ENCODE measurements at regions of chr15 and their contacts with region 1.

Region 1: GRCh38 chr15:64067564-64068030 is 21.3 kb upstream of the DAPK2 start:
- DNase-seq: peak; percentile 84
- ATAC-seq: peak; percentile 91
- H3K4me3 ChIP-seq: no peak overlapping the region
- H3K4me3 Mint-ChIP-seq: no peak overlapping the region
- H3K27ac ChIP-seq: no peak overlapping the region
- H3K27ac Mint-ChIP-seq: peak overlapping the region; percentile 39
- H3K4me1 ChIP-seq: peaks cover 24 to 27% of the 10 kb centered on the region in 2 donors
- H3K4me1 Mint-ChIP-seq: peaks cover 26% of the 10 kb centered on the region
- H3K27me3 ChIP-seq: no peaks in the 10 kb centered on the region
- H3K27me3 Mint-ChIP-seq: no peaks in the 10 kb centered on the region
- CTCF ChIP-seq: peak; percentile 89

Region 2: DNA sequence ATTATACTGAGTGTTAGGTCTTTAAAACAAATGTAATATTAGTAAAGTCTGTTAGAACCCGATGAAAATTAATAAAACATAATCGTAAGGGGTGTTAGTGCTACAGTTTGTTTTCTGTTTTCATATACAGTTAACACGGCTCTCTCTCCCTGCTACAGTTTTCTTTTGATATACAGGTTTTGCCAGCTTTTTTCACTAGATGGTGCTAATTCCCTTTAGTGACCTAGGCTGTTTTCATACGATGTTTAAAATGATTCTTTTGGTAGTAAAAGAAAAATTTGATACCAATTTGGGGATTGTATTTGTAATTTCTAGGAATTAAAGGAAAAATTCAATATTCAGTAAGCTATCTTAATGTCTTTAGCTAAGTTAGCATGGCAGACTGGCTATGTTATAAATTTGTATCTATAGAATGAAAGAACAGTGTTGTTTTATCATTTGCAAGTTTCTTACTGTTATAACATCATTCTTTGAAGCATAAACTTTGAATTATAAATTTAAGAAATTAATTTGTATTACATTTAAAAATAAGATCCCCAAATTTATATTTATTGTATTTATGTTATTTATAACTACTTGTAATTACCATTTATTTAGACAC is 778.7 kb before region 1 on chr15:
- CTCF ChIA-PET with region 1: interaction called, 11 read pairs
- POLR2A ChIA-PET with region 1: no interaction called
- intact Hi-C with region 1: loop called (anchors 2 kb)
- DNase-seq: peak; percentile 61
- ATAC-seq: no peak
- H3K4me3 ChIP-seq: no peak overlapping the region
- H3K4me3 Mint-ChIP-seq: no peak overlapping the region
- H3K27ac ChIP-seq: no peak overlapping the region
- H3K27ac Mint-ChIP-seq: no peak overlapping the region
- H3K4me1 ChIP-seq: peaks cover 5 to 8% of the 10 kb centered on the region in 2 donors
- H3K4me1 Mint-ChIP-seq: peaks cover 11% of the 10 kb centered on the region
- H3K27me3 ChIP-seq: no peaks in the 10 kb centered on the region
- H3K27me3 Mint-ChIP-seq: no peaks in the 10 kb centered on the region
- CTCF ChIP-seq: peak; percentile 82

Region 3: GRCh38 chr15:63610200-63610841 is 457.3 kb before region 1 on chr15:
- CTCF ChIA-PET with region 1: interaction called, 47 read pairs
- POLR2A ChIA-PET with region 1: no interaction called
- intact Hi-C with region 1: loop called (anchors 1 kb)
- DNase-seq: peak; percentile 81
- ATAC-seq: peak; percentile 94
- H3K4me3 ChIP-seq: no peak overlapping the region
- H3K4me3 Mint-ChIP-seq: no peak overlapping the region
- H3K27ac ChIP-seq: peak overlapping the region; percentile 56 to 77
- H3K27ac Mint-ChIP-seq: peak overlapping the region; percentile 78
- H3K4me1 ChIP-seq: peaks cover 23 to 25% of the 10 kb centered on the region in 2 donors
- H3K4me1 Mint-ChIP-seq: peaks cover 24% of the 10 kb centered on the region
- H3K27me3 ChIP-seq: no peaks in the 10 kb centered on the region
- H3K27me3 Mint-ChIP-seq: no peaks in the 10 kb centered on the region
- CTCF ChIP-seq: peak; percentile 83

Region 4: DNA sequence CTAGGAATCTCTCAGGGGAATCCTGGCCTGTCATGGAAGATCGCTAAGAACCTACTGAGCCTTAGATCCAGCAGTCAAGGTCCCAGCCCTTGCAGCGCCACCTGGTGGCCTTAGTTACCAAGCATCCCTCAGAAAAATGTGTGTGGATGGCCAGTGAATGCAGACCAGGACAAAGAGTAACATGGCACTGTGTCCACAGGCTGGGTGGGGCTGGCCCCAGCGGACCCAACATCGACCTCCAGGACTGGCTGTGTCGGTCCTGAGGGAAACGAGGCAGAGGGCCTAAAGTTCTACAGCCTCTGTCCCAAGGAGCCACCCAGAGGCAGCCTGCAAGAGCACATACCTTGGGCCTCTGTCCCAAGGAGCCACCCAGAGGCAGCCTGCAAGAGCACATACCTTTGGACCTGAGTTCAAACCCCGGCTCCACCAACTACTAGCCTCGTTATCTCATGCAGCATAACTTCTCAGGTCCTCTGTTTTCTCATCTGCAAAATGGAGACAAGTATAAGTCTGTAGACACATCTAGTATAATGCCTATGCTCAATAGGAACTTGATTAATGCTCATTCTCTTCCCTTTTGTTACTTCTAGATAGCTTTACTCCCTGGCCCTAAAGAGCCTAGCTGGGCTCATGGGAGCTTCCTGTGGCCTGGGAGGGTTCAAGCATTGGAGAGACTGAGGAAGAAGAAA is 176.4 kb before region 1 on chr15:
- CTCF ChIA-PET with region 1: interaction called, 44 read pairs
- POLR2A ChIA-PET with region 1: no interaction called
- intact Hi-C with region 1: loop called (anchors 1 kb)
- DNase-seq: peak; percentile 84
- ATAC-seq: peak; percentile 67
- H3K4me3 ChIP-seq: no peak overlapping the region
- H3K4me3 Mint-ChIP-seq: no peak overlapping the region
- H3K27ac ChIP-seq: no peak overlapping the region
- H3K27ac Mint-ChIP-seq: peak overlapping the region; percentile 37
- H3K4me1 ChIP-seq: peaks cover 30 to 35% of the 10 kb centered on the region in 2 donors
- H3K4me1 Mint-ChIP-seq: peaks cover 37% of the 10 kb centered on the region
- H3K27me3 ChIP-seq: no peaks in the 10 kb centered on the region
- H3K27me3 Mint-ChIP-seq: no peaks in the 10 kb centered on the region
- CTCF ChIP-seq: peak; percentile 95

Region 5: GRCh38 chr15:63986751-63987341 is 80.8 kb before region 1 on chr15:
- CTCF ChIA-PET with region 1: interaction called, 15 read pairs
- POLR2A ChIA-PET with region 1: no interaction called
- intact Hi-C with region 1: no loop called
- DNase-seq: peak; percentile 79
- ATAC-seq: peak; percentile 90
- H3K4me3 ChIP-seq: no peak overlapping the region
- H3K4me3 Mint-ChIP-seq: peak overlapping the region; percentile 70
- H3K27ac ChIP-seq: peak overlapping the region; percentile 57 to 63
- H3K27ac Mint-ChIP-seq: peak overlapping the region; percentile 96
- H3K4me1 ChIP-seq: peaks cover 46 to 56% of the 10 kb centered on the region in 2 donors
- H3K4me1 Mint-ChIP-seq: peaks cover 62% of the 10 kb centered on the region
- H3K27me3 ChIP-seq: no peaks in the 10 kb centered on the region
- H3K27me3 Mint-ChIP-seq: no peaks in the 10 kb centered on the region
- CTCF ChIP-seq: no peak

Region 6: GRCh38 chr15:64046347-64047153 is 21.0 kb before region 1 on chr15 and contains the start of gene DAPK2:
- CTCF ChIA-PET with region 1: interaction called, 67 read pairs
- POLR2A ChIA-PET with region 1: no interaction called
- intact Hi-C with region 1: no loop called
- DNase-seq: peak; percentile 70
- ATAC-seq: peak; percentile 61
- H3K4me3 ChIP-seq: peak within 1 kb of the TSS; percentile 34 to 54 (median 43)
- H3K4me3 Mint-ChIP-seq: peak within 1 kb of the TSS; percentile 86
- H3K27ac ChIP-seq: no peak within 1 kb of the TSS
- H3K27ac Mint-ChIP-seq: peak within 1 kb of the TSS; percentile 91
- H3K4me1 ChIP-seq: peaks cover 61 to 71% of the 10 kb centered on the region in 2 donors
- H3K4me1 Mint-ChIP-seq: peaks cover 59% of the 10 kb centered on the region
- H3K27me3 ChIP-seq: no peaks in the 10 kb centered on the region
- H3K27me3 Mint-ChIP-seq: no peaks in the 10 kb centered on the region
- CTCF ChIP-seq: peak; percentile 67
- total RNA-seq, gene DAPK2: 31.0 and 31.9 TPM in 2 replicates

Region 7: DNA sequence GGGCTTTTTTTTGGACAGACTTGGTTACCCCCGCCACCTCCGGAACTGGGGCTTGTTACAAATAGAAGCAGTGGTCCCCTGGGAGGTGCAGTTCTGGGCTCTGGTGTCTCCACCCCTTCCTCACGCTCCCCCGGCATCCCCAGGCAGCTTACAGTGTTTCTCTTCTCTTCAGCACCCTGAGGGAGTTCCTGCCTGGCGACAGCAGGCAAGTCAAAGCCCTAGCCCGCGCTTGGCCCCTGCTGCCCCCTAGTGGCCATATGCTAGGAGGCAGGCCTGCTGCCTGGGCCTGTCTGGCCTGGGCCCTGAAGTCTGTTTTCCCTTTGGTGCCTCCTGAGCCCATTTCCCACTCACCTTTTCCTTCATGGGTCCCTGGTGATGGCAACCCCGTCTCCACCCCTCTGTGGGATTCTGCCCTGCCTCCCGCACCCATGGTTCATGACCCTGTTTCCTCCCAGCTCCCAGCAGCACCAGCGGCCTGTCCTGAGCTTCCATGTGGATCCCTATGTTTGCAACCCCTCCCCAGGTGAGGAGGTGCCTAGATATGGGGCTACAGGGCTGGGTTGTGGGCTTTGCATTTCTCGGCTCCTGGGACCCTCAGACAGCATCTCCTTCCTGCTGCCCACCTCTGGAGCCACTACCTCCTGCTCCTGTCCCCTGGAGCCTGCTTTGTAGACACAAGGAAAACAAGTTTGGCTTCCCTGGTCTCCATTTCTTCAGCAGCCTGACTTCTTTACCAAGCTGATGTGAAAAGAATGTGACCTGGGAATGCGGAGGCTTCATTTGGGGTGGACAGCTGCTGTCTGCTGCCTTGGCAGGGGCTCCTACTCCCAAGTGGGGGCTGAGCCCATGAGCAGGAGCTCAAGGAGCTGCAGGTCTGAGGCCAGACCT is 86.1 kb after region 1 on chr15:
- CTCF ChIA-PET with region 1: interaction called, 20 read pairs
- POLR2A ChIA-PET with region 1: no interaction called
- intact Hi-C with region 1: loop called (anchors 1 kb)
- DNase-seq: peak; percentile 97
- ATAC-seq: peak; percentile 82
- H3K4me3 ChIP-seq: peak overlapping the region in 4 of 5 experiments; percentile 91 to 96 (median 94)
- H3K4me3 Mint-ChIP-seq: peak overlapping the region; percentile 90
- H3K27ac ChIP-seq: peak overlapping the region; percentile 79 to 83
- H3K27ac Mint-ChIP-seq: peak overlapping the region; percentile 94
- H3K4me1 ChIP-seq: peaks cover 34 to 67% of the 10 kb centered on the region in 2 donors
- H3K4me1 Mint-ChIP-seq: peaks cover 76% of the 10 kb centered on the region
- H3K27me3 ChIP-seq: no peaks in the 10 kb centered on the region
- H3K27me3 Mint-ChIP-seq: no peaks in the 10 kb centered on the region
- CTCF ChIP-seq: peak; percentile 92